ENCODE measurements at regions of chr7 and their contacts with region 1.

Region 1: GRCh38 chr7:27160546-27161213 is 4.2 kb upstream of the HOXA7 start:
- DNase-seq: peak; percentile 87
- ATAC-seq: peak; percentile 19
- H3K4me3 ChIP-seq: peak overlapping the region; percentile 84
- H3K27ac ChIP-seq: peak overlapping the region; percentile 97
- H3K4me1 ChIP-seq: peaks cover 15% of the 10 kb centered on the region
- H3K27me3 ChIP-seq: no peaks in the 10 kb centered on the region
- CTCF ChIP-seq: peak; percentile 96

Region 2: GRCh38 chr7:25314094-25314730 is 1846.5 kb before region 1 on chr7:
- CTCF ChIA-PET with region 1: interaction called, 12 read pairs
- POLR2A ChIA-PET with region 1: no interaction called
- intact Hi-C with region 1: no loop called
- DNase-seq: no peak
- ATAC-seq: no peak
- H3K4me3 ChIP-seq: no peak overlapping the region
- H3K27ac ChIP-seq: no peak overlapping the region
- H3K4me1 ChIP-seq: no peaks in the 10 kb centered on the region
- H3K27me3 ChIP-seq: peaks cover 51% of the 10 kb centered on the region
- CTCF ChIP-seq: no peak

Region 3: GRCh38 chr7:26156454-26157365 is 1004.0 kb before region 1 on chr7:
- CTCF ChIA-PET with region 1: no interaction called
- POLR2A ChIA-PET with region 1: no interaction called
- intact Hi-C with region 1: loop called (anchors 5 kb)
- DNase-seq: peak; percentile 93
- ATAC-seq: peak; percentile 48
- H3K4me3 ChIP-seq: peak overlapping the region; percentile 62; the same call in 1 of the 2 replicates
- H3K27ac ChIP-seq: peak overlapping the region; percentile 96
- H3K4me1 ChIP-seq: peaks cover 74% of the 10 kb centered on the region
- H3K27me3 ChIP-seq: no peaks in the 10 kb centered on the region
- CTCF ChIP-seq: no peak

Region 4: DNA sequence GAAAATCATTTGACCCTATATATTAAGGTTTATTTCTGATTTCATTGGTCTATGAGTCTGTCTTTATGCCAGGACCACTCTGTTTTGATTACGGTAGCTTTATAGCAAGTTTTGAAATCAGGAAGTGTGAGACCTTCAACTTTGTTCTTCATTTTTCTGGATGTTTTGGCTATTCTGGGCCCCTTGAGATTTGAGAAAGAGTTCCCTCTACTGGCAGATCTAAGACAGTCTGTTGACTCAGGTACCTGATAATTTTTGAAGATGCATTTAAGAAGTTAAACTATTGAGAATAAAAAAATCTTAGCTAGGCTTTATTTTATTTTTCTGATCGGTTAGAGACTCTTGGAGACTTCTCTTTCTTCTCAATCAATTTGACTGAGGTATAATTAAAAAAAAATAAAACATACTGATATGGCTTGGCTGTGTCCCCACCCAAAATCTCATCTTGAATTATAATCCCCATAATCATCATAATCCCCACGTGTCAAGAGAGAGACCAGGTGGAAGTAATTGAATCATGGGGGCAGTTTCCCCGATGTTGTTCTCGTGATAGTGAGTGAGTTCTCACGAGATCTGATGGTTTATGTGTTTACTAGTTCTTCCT is 659.8 kb before region 1 on chr7:
- CTCF ChIA-PET with region 1: no interaction called
- POLR2A ChIA-PET with region 1: no interaction called
- intact Hi-C with region 1: loop called (anchors 2 kb)
- DNase-seq: peak; percentile 58
- ATAC-seq: peak; percentile 71
- H3K4me3 ChIP-seq: no peak overlapping the region
- H3K27ac ChIP-seq: no peak overlapping the region
- H3K4me1 ChIP-seq: no peaks in the 10 kb centered on the region
- H3K27me3 ChIP-seq: no peaks in the 10 kb centered on the region
- CTCF ChIP-seq: peak; percentile 79

Region 5: GRCh38 chr7:26853788-26854393 is 306.8 kb before region 1 on chr7:
- CTCF ChIA-PET with region 1: interaction called, 7 read pairs
- POLR2A ChIA-PET with region 1: interaction called, 9 read pairs
- intact Hi-C with region 1: loop called (anchors 1 kb)
- DNase-seq: peak; percentile 73
- ATAC-seq: peak; percentile 92
- H3K4me3 ChIP-seq: no peak overlapping the region
- H3K27ac ChIP-seq: no peak overlapping the region
- H3K4me1 ChIP-seq: peaks cover 8% of the 10 kb centered on the region; the same call in 1 of the 2 replicates
- H3K27me3 ChIP-seq: no peaks in the 10 kb centered on the region
- CTCF ChIP-seq: peak; percentile 77

Region 6: DNA sequence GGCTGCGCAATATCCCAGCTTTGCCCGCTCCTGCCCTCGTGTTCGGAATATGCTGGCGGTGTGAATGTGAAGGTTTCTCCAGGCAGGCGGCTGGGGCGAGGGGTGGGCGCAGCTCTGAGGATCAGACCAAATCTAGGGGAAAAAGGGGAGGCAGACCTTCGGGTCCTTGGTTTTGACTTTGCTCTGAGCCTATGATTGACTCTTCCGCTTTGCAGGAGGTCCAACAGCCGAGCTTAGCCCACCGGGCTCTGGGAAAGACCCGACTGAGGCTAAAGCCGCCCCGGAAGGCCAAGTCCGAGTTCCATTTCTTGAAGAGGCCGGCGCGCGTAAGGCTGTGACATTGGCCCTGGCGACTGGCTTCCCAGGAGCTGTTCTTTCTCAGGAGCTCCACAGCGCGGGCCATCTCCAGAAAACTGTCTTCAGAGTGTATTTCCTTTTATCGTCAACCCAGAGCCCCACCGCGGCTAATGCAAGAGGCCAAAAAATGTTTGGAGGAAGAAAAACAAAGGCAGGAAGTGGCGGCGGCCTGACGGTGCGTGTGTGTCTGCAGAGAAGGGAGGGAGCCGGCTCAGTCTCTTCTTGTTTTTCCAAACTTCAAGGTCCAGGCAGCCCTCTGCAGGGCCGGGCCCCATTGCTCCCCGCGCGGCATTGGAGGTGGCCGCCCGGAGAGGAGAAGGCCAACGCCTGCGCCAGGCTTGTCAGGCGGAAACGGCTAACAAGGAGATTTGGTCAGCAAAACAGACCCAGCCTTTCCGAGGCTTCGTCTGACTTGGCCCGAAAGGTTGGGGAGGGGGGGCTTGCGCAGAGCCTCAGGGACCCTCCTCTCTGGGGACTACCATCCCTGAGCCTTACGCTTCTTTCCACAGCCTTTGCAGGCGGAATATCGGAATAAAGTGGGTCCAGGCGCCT is 28.0 kb after region 1 on chr7:
- CTCF ChIA-PET with region 1: interaction called, 3 read pairs
- POLR2A ChIA-PET with region 1: interaction called, 26 read pairs
- intact Hi-C with region 1: no loop called
- DNase-seq: peak; percentile 48
- ATAC-seq: peak; percentile 1; the same call in 1 of the 2 replicates
- H3K4me3 ChIP-seq: peak overlapping the region; percentile 91
- H3K27ac ChIP-seq: peak overlapping the region; percentile 97
- H3K4me1 ChIP-seq: peaks cover 41% of the 10 kb centered on the region
- H3K27me3 ChIP-seq: no peaks in the 10 kb centered on the region
- CTCF ChIP-seq: no peak

Measured in PC-3 (cell line).